PC-9 (cell line): ENCODE measurements at regions of chr2 and their contacts with region 1.

Region 1: GRCh38 chr2:43199492-43200481 is 26.6 kb downstream of the ZFP36L2 start:
- DNase-seq: peak; percentile 93 to 98
- H3K4me3 ChIP-seq: no peak overlapping the region
- H3K27ac ChIP-seq: peak overlapping the region; percentile 86
- H3K4me1 ChIP-seq: peaks cover 40% of the 10 kb centered on the region
- H3K27me3 ChIP-seq: no peaks in the 10 kb centered on the region
- CTCF ChIP-seq: no peak

Region 2: DNA sequence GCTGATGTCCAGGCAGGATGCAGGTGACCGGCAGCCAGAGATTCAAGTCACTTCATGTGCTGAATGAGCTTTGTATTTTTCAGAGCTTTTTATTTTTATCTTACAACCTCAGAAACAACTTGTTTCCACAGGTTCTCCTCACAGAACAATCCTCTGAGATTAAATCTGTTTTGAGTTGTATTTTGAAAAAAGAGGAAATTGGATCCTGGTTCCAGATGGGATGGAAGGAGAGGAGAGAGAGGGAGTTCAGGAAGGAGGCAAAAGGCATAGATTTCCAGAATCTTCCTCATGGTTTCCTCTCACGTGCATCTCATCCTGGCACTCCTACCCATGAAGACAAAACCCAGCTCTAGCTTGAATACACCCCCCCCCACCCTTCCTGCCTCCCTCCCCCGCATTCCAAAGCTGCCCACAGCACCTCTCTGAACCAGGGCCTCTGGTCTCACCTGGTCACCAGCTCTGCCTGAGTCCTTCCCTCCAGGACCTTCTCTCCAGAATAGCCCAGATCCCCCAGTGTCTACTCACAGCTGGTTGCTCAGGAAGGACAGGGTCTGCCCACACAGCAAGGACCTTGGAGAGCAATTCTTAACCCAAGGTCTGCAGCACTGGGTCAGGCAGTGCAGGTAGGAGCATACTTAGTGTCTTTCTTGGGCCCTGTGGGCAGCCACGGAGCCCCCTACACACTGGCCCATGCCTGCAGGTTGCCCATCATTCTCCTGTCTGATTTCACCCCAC is 78.0 kb before region 1 on chr2:
- CTCF ChIA-PET with region 1: no interaction called
- POLR2A ChIA-PET with region 1: interaction called, 10 read pairs
- intact Hi-C with region 1: no loop called
- DNase-seq: no peak
- H3K4me3 ChIP-seq: no peak overlapping the region
- H3K27ac ChIP-seq: no peak overlapping the region
- H3K4me1 ChIP-seq: peaks cover 1% of the 10 kb centered on the region
- H3K27me3 ChIP-seq: no peaks in the 10 kb centered on the region
- CTCF ChIP-seq: no peak

Region 3: DNA sequence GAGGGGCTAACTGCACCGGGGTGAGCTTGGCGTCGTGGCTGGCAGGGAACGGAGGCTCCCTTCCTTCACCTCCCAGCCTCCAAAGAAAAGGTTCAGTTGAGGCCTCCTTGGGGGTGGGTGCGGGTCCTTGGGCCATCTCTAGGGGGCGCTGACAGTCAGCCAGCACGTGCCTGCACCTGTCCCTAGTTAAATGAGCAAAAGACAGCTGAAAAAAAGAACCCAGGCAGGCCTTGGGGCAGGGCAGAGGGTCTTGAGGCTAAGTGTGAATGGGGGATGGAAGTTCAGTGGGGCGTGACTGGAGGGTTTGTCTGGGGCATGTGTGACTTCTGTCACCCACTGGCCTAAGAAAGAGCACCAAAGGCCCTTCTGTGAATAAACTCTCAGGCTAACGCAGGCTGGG is 29.8 kb before region 1 on chr2:
- CTCF ChIA-PET with region 1: no interaction called
- POLR2A ChIA-PET with region 1: no interaction called
- intact Hi-C with region 1: loop called (anchors 2 kb)
- DNase-seq: peak; percentile 38 to 50
- H3K4me3 ChIP-seq: peak overlapping the region; percentile 53; the same call in 1 of the 2 replicates
- H3K27ac ChIP-seq: peak overlapping the region; percentile 97
- H3K4me1 ChIP-seq: peaks cover 74% of the 10 kb centered on the region
- H3K27me3 ChIP-seq: no peaks in the 10 kb centered on the region
- CTCF ChIP-seq: peak; percentile 96

Region 4: DNA sequence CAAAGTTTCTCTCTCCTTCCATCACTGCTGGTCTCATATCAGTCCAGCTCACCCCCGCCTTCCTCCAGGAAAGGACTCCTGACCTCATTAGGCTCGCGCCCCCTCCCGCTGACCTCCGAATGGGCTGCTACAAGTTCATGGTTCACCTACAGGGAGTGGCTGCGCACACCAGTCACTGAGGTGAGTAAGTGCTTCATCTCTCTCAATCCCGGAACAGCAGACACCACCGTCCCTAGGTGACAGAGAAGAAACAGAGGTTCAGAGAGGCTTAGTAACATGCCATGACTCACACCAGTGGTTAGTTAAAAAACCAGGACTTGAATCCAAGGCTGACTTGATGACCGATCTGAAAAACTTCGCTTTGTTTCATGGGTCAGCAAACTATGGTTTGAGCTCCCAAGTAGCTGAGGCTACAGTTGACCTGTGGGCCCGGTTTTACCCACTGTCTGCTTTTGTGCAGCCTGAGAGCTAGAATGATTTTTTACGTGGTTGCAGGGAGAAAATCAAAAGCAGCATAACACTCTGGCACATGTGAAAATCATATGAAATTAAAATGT is 15.4 kb before region 1 on chr2:
- CTCF ChIA-PET with region 1: no interaction called
- POLR2A ChIA-PET with region 1: no interaction called
- intact Hi-C with region 1: loop called (anchors 2 kb)
- DNase-seq: peak; percentile 71 to 98
- H3K4me3 ChIP-seq: no peak overlapping the region
- H3K27ac ChIP-seq: peak overlapping the region; percentile 80
- H3K4me1 ChIP-seq: peaks cover 76% of the 10 kb centered on the region
- H3K27me3 ChIP-seq: no peaks in the 10 kb centered on the region
- CTCF ChIP-seq: no peak